ENCODE measurements at regions of chr12 and their contacts with region 1.

Region 1: DNA sequence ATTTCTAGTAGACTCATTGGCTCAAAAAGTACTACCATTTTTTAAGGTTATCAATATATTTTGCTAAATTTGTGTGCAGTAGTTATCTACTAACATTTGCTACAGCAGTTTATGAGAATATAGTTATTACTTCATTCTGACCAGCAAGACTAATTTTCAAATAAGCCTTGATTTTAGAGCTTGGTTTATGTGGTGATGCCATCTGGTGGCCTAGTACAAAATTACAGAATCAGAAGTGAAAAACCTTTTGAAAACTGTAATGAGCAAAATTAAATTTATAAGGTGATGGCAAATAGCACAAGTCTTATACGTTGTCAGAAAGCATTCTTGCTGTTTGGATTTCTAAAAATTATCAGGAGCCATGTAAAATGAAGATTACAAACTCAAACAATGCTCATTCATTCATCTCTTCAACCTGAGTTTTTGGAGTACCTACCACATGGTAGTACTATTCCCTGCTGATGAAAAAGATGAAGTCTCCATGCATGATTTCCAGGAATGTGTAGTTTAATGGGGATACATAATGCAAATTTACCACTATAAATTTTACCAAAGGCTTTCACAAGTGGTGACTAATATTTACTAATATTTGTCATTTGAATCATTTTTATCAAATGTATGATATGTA is 51.0 kb downstream of the MAGOHB start:
- DNase-seq: peak in 2 of 4 donors; percentile 24 to 50
- ATAC-seq: peak; percentile 77
- H3K4me3 ChIP-seq: no peak overlapping the region
- H3K27ac ChIP-seq: no peak overlapping the region
- H3K4me1 ChIP-seq: no peaks in the 10 kb centered on the region
- H3K27me3 ChIP-seq: peaks cover 0 to under 1% of the 10 kb centered on the region in 2 donors
- CTCF ChIP-seq: peak; percentile 61 to 62

Region 2: GRCh38 chr12:10235761-10236631 is 326.4 kb before region 1 on chr12:
- intact Hi-C with region 1: loop called in 1 of 2 experiments (anchors 5 kb)
- DNase-seq: peak in 2 of 4 donors; percentile 30 to 60
- ATAC-seq: peak; percentile 93
- H3K4me3 ChIP-seq: no peak overlapping the region
- H3K27ac ChIP-seq: peak overlapping the region in 1 of 2 donors; percentile 18
- H3K4me1 ChIP-seq: peaks cover 0 to 9% of the 10 kb centered on the region in 2 donors
- H3K27me3 ChIP-seq: no peaks in the 10 kb centered on the region
- CTCF ChIP-seq: peak; percentile 87 to 90

Region 3: GRCh38 chr12:10320643-10321042 is 241.8 kb before region 1 on chr12:
- intact Hi-C with region 1: loop called in 1 of 2 experiments (anchors 10 kb)
- DNase-seq: no peak
- ATAC-seq: no peak
- H3K4me3 ChIP-seq: no peak overlapping the region
- H3K27ac ChIP-seq: no peak overlapping the region
- H3K4me1 ChIP-seq: no peaks in the 10 kb centered on the region
- H3K27me3 ChIP-seq: no peaks in the 10 kb centered on the region
- CTCF ChIP-seq: no peak

Region 4: DNA sequence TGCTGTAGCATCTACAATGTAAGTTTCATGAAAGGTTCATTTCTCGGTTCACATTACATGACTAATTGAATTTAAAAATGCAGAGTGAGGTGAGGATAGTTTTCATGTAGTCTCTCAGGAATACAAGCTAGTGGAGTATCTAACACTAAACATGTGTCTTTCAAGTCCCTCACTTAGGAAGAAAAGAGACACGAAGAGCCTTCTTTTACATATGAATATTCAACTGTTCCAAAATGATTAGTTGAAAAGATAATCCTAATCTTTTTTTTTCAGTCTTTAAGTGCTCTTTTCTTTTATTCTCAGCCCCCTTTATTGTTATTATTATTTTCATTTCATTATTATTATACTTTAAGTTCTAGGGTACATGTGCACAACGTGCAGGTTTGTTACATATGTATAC is 276.0 kb after region 1 on chr12:
- intact Hi-C with region 1: no loop called
- DNase-seq: no peak
- ATAC-seq: no peak
- H3K4me3 ChIP-seq: no peak overlapping the region
- H3K27ac ChIP-seq: no peak overlapping the region
- H3K4me1 ChIP-seq: no peaks in the 10 kb centered on the region
- H3K27me3 ChIP-seq: no peaks in the 10 kb centered on the region
- CTCF ChIP-seq: no peak